ENCODE measurements at regions of chr19 and their contacts with region 1.

Region 1: DNA sequence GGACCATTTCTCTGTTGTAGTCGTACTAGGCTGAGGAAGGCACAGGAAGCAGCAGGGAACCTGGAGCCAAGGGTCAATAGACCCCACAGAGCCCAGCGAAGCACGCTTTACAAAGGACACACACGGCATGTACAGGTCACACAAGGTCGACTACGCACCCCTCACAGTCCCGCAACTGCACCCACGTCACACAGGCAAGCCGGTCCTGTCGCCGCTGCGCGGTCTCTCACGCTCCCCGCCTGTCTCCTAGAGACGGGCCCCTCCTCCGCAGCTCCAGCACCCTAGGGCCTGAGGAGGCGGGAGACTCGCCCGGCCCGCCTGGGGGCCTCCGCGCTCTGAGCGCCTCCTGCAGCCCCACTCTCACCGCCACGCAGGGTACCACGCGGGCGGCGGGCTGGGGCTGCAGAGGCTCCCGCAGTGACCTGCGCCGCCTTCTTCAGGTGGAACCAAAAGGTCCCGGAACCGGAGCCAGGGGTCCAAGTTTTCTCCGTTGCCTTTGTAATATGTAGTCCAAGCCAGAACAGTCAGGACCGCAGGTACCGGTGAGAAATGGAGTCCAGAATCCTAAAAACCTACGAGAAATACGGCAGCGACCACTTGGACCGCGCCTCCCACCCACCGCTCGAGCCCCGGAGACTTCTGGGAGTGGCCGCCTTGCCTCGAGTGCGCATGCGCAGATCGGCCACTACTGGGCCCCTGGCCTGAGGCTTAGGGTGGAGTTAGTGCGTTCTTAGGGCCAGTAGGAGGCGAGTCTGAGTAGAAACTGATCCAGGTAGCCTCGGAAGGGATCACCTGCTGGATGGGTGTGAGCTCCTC is at the start of gene ZNF607:
- DNase-seq: peak; percentile 67
- H3K4me3 Mint-ChIP-seq: peak within 1 kb of the TSS; percentile 87
- H3K27ac Mint-ChIP-seq: peak within 1 kb of the TSS; percentile 67
- H3K4me1 Mint-ChIP-seq: peaks cover 9% of the 10 kb centered on the region
- H3K27me3 Mint-ChIP-seq: no peaks in the 10 kb centered on the region
- total RNA-seq, gene ZNF607: 1.9 and 2.4 TPM in 2 replicates

Region 2: DNA sequence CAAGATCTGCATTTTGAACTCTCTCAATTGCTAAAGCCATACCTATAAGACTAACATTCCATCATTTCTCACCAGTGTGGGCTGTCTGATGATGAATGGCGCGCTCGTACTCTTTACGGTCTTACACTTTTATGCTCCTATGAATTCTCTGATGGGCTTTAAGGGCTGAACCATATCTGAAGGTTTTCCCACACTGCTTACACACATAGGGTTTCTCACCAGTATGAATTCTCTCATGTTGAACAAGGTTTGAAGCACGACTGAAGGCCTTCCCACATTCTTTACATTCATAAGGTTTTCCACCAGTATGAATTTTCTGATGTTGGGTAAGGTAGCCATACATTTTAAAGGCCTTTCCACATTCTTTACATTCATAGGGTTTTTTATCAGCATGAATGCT is 19.1 kb after region 1 on chr19:
- intact Hi-C with region 1: no loop called
- DNase-seq: no peak
- H3K4me3 Mint-ChIP-seq: no peak overlapping the region
- H3K27ac Mint-ChIP-seq: no peak overlapping the region
- H3K4me1 Mint-ChIP-seq: no peaks in the 10 kb centered on the region
- H3K27me3 Mint-ChIP-seq: no peaks in the 10 kb centered on the region

Region 3: GRCh38 chr19:37779127-37780005 is 60.0 kb after region 1 on chr19 and contains the start of gene ZNF573:
- intact Hi-C with region 1: loop called (anchors 1 kb)
- DNase-seq: peak; percentile 73
- H3K4me3 Mint-ChIP-seq: peak within 1 kb of the TSS; percentile 95
- H3K27ac Mint-ChIP-seq: peak within 1 kb of the TSS; percentile 86
- H3K4me1 Mint-ChIP-seq: peaks cover 15% of the 10 kb centered on the region
- H3K27me3 Mint-ChIP-seq: no peaks in the 10 kb centered on the region
- total RNA-seq, gene ZNF573: 3.7 and 5.6 TPM in 2 replicates